ENCODE measurements at regions of chr10 and their contacts with region 1.

Region 1: GRCh38 chr10:72364239-72364777 is 9.6 kb upstream of the DNAJB12 start:
- DNase-seq: peak; percentile 81
- ATAC-seq: peak; percentile 96
- H3K4me3 ChIP-seq: 0 out of 4 replicates have a peak overlapping the region, but pooled peaks of 1 of the 2 experiments have one; percentile 3
- H3K27ac ChIP-seq: peak overlapping the region; percentile 71
- H3K4me1 ChIP-seq: peaks cover 7% of the 10 kb centered on the region; the same call in 1 of the 2 replicates
- H3K27me3 ChIP-seq: no peaks in the 10 kb centered on the region
- CTCF ChIP-seq: peak; percentile 97

Region 2: GRCh38 chr10:72515455-72515854 is 151.1 kb after region 1 on chr10:
- CTCF ChIA-PET with region 1: no interaction called
- POLR2A ChIA-PET with region 1: interaction called, 12 read pairs
- in situ Hi-C with region 1: no loop called
- intact Hi-C with region 1: no loop called
- DNase-seq: no peak
- ATAC-seq: no peak
- H3K4me3 ChIP-seq: no peak overlapping the region
- H3K27ac ChIP-seq: no peak overlapping the region
- H3K4me1 ChIP-seq: no peaks in the 10 kb centered on the region
- H3K27me3 ChIP-seq: no peaks in the 10 kb centered on the region
- CTCF ChIP-seq: no peak

Region 3: GRCh38 chr10:72597897-72598296 is 233.6 kb after region 1 on chr10:
- CTCF ChIA-PET with region 1: no interaction called
- POLR2A ChIA-PET with region 1: no interaction called
- in situ Hi-C with region 1: no loop called
- intact Hi-C with region 1: no loop called
- DNase-seq: no peak
- ATAC-seq: no peak
- H3K4me3 ChIP-seq: no peak overlapping the region
- H3K27ac ChIP-seq: no peak overlapping the region
- H3K4me1 ChIP-seq: no peaks in the 10 kb centered on the region
- H3K27me3 ChIP-seq: no peaks in the 10 kb centered on the region
- CTCF ChIP-seq: no peak

Region 4: GRCh38 chr10:72834183-72834825 is 470.0 kb after region 1 on chr10:
- CTCF ChIA-PET with region 1: interaction called, 13 read pairs
- POLR2A ChIA-PET with region 1: interaction called, 5 read pairs
- in situ Hi-C with region 1: no loop called
- intact Hi-C with region 1: loop called (anchors 2 kb)
- DNase-seq: peak; percentile 42
- ATAC-seq: peak; percentile 91
- H3K4me3 ChIP-seq: no peak overlapping the region
- H3K27ac ChIP-seq: no peak overlapping the region
- H3K4me1 ChIP-seq: 0 out of 2 replicates have a peak, but pooled peaks cover 8% of the 10 kb centered on the region
- H3K27me3 ChIP-seq: no peaks in the 10 kb centered on the region
- CTCF ChIP-seq: peak; percentile 78; the same call in 1 of the 2 replicates

Region 5: GRCh38 chr10:72875250-72876055 is 511.1 kb after region 1 on chr10:
- CTCF ChIA-PET with region 1: interaction called, 5 read pairs
- POLR2A ChIA-PET with region 1: no interaction called
- in situ Hi-C with region 1: no loop called
- intact Hi-C with region 1: loop called (anchors 2 kb)
- DNase-seq: peak; percentile 24
- ATAC-seq: 0 out of 2 replicates have a peak, but pooled peaks have one; percentile 58
- H3K4me3 ChIP-seq: no peak overlapping the region
- H3K27ac ChIP-seq: no peak overlapping the region
- H3K4me1 ChIP-seq: no peaks in the 10 kb centered on the region
- H3K27me3 ChIP-seq: no peaks in the 10 kb centered on the region
- CTCF ChIP-seq: peak; percentile 81; the same call in 1 of the 2 replicates

Measured in Panc1 (cell line).